OCI-LY7 (cell line): ENCODE measurements at regions of chr17 and their contacts with region 1.

Region 1: GRCh38 chr17:82022981-82023374 is at the start of gene LRRC45:
- DNase-seq: peak; percentile 100
- H3K4me3 ChIP-seq: peak within 1 kb of the TSS; percentile 94
- H3K27ac ChIP-seq: peak within 1 kb of the TSS; percentile 44
- H3K4me1 ChIP-seq: peaks cover 30% of the 10 kb centered on the region
- CTCF ChIP-seq: no peak
- total RNA-seq, gene LRRC45: 52.0 and 62.6 TPM in 2 replicates

Region 2: GRCh38 chr17:81959362-81960129 is 63.4 kb before region 1 on chr17:
- CTCF ChIA-PET with region 1: interaction called, 9 read pairs
- POLR2A ChIA-PET with region 1: no interaction called
- intact Hi-C with region 1: loop called (anchors 1 kb)
- DNase-seq: peak; percentile 83
- H3K4me3 ChIP-seq: peak overlapping the region; percentile 58
- H3K27ac ChIP-seq: no peak overlapping the region
- H3K4me1 ChIP-seq: peaks cover 11% of the 10 kb centered on the region
- CTCF ChIP-seq: peak; percentile 88

Region 3: GRCh38 chr17:81967533-81968395 is 55.2 kb before region 1 on chr17:
- CTCF ChIA-PET with region 1: interaction called, 3 read pairs
- POLR2A ChIA-PET with region 1: no interaction called
- intact Hi-C with region 1: loop called (anchors 2 kb)
- DNase-seq: peak; percentile 97
- H3K4me3 ChIP-seq: peak overlapping the region; percentile 68
- H3K27ac ChIP-seq: peak overlapping the region; percentile 44
- H3K4me1 ChIP-seq: peaks cover 29% of the 10 kb centered on the region
- CTCF ChIP-seq: no peak

Region 4: DNA sequence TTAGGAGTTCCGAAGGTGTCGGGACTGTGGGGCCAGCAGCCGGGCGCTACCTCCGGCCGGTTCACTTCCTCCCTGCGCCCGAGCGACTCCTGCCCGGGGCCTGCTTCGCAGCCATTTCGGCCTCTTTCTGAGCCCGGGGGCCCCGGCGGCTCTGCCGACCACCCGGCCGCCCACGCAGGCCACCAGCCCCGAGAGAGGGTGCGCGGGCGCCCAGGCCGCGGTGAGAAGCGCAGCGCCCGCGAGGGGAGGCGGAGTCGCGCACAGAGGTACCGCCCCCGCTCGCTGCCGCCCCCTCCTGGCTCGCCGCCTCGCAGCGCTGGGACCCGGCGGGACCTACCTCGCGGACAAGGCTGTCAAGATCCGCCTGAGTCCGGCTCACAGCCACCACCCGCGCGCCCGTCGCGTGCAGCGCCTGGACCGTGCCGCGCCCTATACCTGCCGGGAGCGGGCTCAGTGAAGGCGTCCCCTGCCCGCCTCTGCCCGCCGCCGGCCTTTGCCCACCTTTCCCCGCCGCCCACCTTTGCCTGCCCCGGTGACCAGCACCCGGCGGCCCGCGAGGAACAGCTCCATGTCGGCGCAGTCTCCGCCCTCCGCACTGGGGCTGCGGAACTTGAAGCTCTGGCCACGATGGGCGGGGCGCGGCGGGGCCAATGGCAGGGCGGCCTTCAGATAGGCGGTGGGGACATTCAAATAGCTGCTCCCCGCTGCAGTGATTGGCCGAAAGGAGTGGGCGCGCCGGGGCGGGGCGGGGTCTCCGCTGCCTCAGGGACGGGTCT is 14.3 kb after region 1 on chr17 and contains the start of gene DCXR:
- CTCF ChIA-PET with region 1: interaction called, 19 read pairs
- POLR2A ChIA-PET with region 1: interaction called, 9 read pairs
- intact Hi-C with region 1: loop called (anchors 1 kb)
- DNase-seq: peak; percentile 99
- H3K4me3 ChIP-seq: peak within 1 kb of the TSS; percentile 72
- H3K27ac ChIP-seq: peak within 1 kb of the TSS; percentile 70
- H3K4me1 ChIP-seq: peaks cover 19% of the 10 kb centered on the region
- CTCF ChIP-seq: peak; percentile 91
- total RNA-seq, gene DCXR: 138 and 147 TPM in 2 replicates

Region 5: GRCh38 chr17:82205719-82206508 is 182.9 kb after region 1 on chr17:
- CTCF ChIA-PET with region 1: no interaction called
- POLR2A ChIA-PET with region 1: no interaction called
- intact Hi-C with region 1: no loop called
- DNase-seq: peak; percentile 93
- H3K4me3 ChIP-seq: peak overlapping the region; percentile 36
- H3K27ac ChIP-seq: peak overlapping the region; percentile 29
- H3K4me1 ChIP-seq: peaks cover 18% of the 10 kb centered on the region
- CTCF ChIP-seq: peak; percentile 99